Mammary epithelial cell (primary cell): ENCODE measurements at regions of chr11 and their contacts with region 1.

Region 1: DNA sequence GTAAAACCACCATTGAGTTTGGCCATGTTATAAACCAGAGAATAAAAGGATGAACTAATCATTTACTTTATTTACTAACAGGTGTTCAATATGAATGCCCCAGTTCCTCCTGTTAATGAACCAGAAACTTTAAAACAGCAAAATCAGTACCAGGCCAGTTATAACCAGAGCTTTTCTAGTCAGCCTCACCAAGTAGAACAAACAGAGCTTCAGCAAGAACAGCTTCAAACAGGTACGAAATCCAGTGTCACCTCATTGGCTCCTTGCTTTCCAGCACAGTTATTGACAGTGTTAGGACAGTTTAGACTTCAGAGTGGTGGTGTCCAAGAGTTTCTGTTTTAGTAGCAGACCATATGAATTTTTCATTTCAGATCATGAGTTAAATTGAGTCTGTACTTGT is 13.6 kb upstream of the NAT10 start:
- DNase-seq: no peak
- H3K4me3 ChIP-seq: no peak overlapping the region
- H3K27ac ChIP-seq: no peak overlapping the region
- H3K4me1 ChIP-seq: no peaks in the 10 kb centered on the region
- H3K27me3 ChIP-seq: no peaks in the 10 kb centered on the region
- CTCF ChIP-seq: no peak

Region 2: GRCh38 chr11:34149786-34150185 is 58.0 kb after region 1 on chr11:
- CTCF ChIA-PET with region 1: no interaction called
- dilution Hi-C with region 1: loop called (anchors 5 kb)
- in situ Hi-C with region 1: no loop called
- intact Hi-C with region 1: no loop called
- DNase-seq: no peak
- H3K4me3 ChIP-seq: no peak overlapping the region
- H3K27ac ChIP-seq: no peak overlapping the region
- H3K4me1 ChIP-seq: no peaks in the 10 kb centered on the region
- H3K27me3 ChIP-seq: no peaks in the 10 kb centered on the region
- CTCF ChIP-seq: peak in 1 of 2 donors; percentile 27

Region 3: GRCh38 chr11:34449013-34449412 is 357.2 kb after region 1 on chr11:
- CTCF ChIA-PET with region 1: no interaction called
- dilution Hi-C with region 1: no loop called
- in situ Hi-C with region 1: no loop called
- intact Hi-C with region 1: no loop called
- DNase-seq: peak; percentile 60
- H3K4me3 ChIP-seq: no peak overlapping the region
- H3K27ac ChIP-seq: no peak overlapping the region
- H3K4me1 ChIP-seq: peaks cover 8% of the 10 kb centered on the region
- H3K27me3 ChIP-seq: no peaks in the 10 kb centered on the region
- CTCF ChIP-seq: no peak